HEK293 (cell line): ENCODE measurements at regions of chr5 and their contacts with region 1.

Region 1: GRCh38 chr5:57137401-57137800 is 36.5 kb upstream of the GPBP1 start:
- H3K4me3 ChIP-seq: no peak overlapping the region
- H3K27ac ChIP-seq: no peak overlapping the region
- H3K4me1 ChIP-seq: no peaks in the 10 kb centered on the region
- CTCF ChIP-seq: no peak

Region 2: DNA sequence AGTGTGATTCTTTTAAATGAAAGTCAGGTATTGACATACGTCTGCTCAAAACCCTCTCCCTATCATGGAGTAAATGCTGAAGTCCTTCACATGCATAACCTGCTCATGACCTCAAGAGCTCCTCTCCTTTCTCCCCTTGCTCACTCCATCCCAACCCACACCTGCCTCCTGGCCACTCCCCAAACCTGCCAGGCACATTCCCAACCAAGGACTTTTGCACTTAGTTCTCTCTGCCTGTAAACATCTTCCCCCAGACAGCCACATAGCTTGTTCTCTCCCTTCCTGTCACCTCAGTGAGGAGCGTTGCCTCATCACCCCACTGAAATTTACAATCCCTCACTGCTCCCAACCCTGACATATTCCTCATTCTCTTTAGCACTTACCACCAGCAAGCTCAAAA is 219.3 kb before region 1 on chr5:
- CTCF ChIA-PET with region 1: interaction called, 12 read pairs
- POLR2A ChIA-PET with region 1: no interaction called
- H3K4me3 ChIP-seq: no peak overlapping the region
- H3K27ac ChIP-seq: no peak overlapping the region
- H3K4me1 ChIP-seq: no peaks in the 10 kb centered on the region
- CTCF ChIP-seq: no peak

Region 3: DNA sequence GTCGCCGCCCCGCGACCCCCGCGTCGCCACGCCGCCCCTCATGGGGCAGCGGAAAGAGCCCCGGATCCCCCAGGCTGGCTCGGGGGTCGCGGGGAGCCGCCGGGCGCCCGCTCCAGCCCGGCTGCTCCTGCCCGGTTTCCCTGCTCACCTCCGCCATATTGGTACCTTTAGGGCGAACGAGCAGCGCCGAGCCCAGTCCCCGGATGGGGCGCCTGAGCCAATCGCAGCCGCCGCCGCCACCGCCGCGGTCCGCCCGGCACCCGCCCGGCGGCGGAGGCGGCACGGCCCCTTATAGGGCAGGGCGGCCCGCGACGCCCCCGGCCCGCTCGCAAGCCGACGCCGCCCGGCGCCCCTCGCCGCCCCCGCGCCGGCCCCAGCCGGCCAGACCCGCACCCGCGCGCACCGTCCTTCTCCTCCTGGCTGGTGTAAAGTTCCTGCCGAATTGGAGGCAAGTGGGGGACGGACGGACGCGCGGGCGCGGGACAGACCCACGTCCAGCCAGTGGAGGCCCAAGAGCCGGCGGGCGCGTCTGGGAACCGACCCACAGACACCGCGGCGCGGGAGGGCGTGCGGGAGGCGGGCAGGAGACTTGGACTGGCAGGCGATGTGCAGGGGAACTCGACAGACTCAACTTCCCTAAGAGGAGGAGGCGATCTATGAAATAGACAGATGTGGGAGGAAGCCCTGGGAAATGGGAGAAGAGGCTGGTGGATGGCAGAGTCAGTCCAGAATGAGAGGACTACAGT is 185.3 kb before region 1 on chr5 and contains the start of gene MIER3:
- CTCF ChIA-PET with region 1: interaction called, 10 read pairs
- POLR2A ChIA-PET with region 1: interaction called, 5 read pairs
- H3K4me3 ChIP-seq: peak within 1 kb of the TSS; percentile 69
- H3K27ac ChIP-seq: peak within 1 kb of the TSS; percentile 89
- H3K4me1 ChIP-seq: 0 out of 2 replicates have a peak, but pooled peaks cover 5% of the 10 kb centered on the region
- CTCF ChIP-seq: peak; percentile 43

Region 4: GRCh38 chr5:57219386-57219785 is 82.0 kb after region 1 on chr5:
- CTCF ChIA-PET with region 1: interaction called, 15 read pairs
- POLR2A ChIA-PET with region 1: no interaction called
- H3K4me3 ChIP-seq: no peak overlapping the region
- H3K27ac ChIP-seq: no peak overlapping the region
- H3K4me1 ChIP-seq: no peaks in the 10 kb centered on the region
- CTCF ChIP-seq: no peak

Region 5: DNA sequence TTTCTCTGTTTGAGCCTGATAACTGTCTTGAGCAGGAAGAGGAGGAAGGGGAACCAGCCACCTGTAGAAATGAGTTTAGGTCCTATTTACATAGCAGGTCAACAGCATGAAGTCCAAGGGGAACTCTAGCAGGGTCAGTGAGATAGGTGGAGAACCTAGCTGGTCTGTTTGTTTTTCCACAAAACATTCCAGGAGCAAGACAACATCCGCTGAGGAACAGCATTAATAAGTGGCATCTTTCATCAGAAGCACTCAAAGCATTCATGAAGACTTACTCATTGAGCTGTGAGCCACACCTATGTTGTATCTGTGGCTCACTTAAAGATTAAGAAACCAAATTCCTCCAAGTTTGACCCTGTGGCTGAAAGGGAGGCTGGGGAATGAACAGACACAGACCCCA is 229.3 kb after region 1 on chr5:
- CTCF ChIA-PET with region 1: no interaction called
- POLR2A ChIA-PET with region 1: no interaction called
- H3K4me3 ChIP-seq: no peak overlapping the region
- H3K27ac ChIP-seq: no peak overlapping the region
- H3K4me1 ChIP-seq: no peaks in the 10 kb centered on the region
- CTCF ChIP-seq: no peak